Ovary (tissue), 10 donors: ENCODE measurements at regions of chr20 and their contacts with region 1.

Region 1: GRCh38 chr20:13105864-13106457 is 97.2 kb downstream of the SPTLC3 start:
- DNase-seq: no peak
- H3K4me3 ChIP-seq: no peak overlapping the region
- H3K27ac ChIP-seq: no peak overlapping the region
- H3K4me1 ChIP-seq: no peaks in the 10 kb centered on the region
- H3K27me3 ChIP-seq: no peaks in the 10 kb centered on the region
- CTCF ChIP-seq: peak; percentile 49 to 60 (median 55)
- EP300 ChIP-seq: no peak
- POLR2A ChIP-seq: no peak

Region 2: GRCh38 chr20:12925214-12925755 is 180.7 kb before region 1 on chr20:
- intact Hi-C with region 1: loop called in 2 of 4 experiments (anchors 5 to 10 kb)
- DNase-seq: peak; percentile 13 to 46 (median 40)
- H3K4me3 ChIP-seq: no peak overlapping the region
- H3K27ac ChIP-seq: no peak overlapping the region
- H3K4me1 ChIP-seq: no peaks in the 10 kb centered on the region
- H3K27me3 ChIP-seq: no peaks in the 10 kb centered on the region
- CTCF ChIP-seq: peak; percentile 59 to 84 (median 67)
- EP300 ChIP-seq: no peak
- POLR2A ChIP-seq: no peak

Region 3: GRCh38 chr20:12970372-12970821 is 135.6 kb before region 1 on chr20:
- intact Hi-C with region 1: loop called (anchors 5 to 10 kb)
- DNase-seq: peak in 1 of 5 donors; percentile 22
- H3K4me3 ChIP-seq: no peak overlapping the region
- H3K27ac ChIP-seq: no peak overlapping the region
- H3K4me1 ChIP-seq: no peaks in the 10 kb centered on the region
- H3K27me3 ChIP-seq: no peaks in the 10 kb centered on the region
- CTCF ChIP-seq: peak in 2 of 3 donors; percentile 31 to 40
- EP300 ChIP-seq: no peak
- POLR2A ChIP-seq: no peak

Region 4: DNA sequence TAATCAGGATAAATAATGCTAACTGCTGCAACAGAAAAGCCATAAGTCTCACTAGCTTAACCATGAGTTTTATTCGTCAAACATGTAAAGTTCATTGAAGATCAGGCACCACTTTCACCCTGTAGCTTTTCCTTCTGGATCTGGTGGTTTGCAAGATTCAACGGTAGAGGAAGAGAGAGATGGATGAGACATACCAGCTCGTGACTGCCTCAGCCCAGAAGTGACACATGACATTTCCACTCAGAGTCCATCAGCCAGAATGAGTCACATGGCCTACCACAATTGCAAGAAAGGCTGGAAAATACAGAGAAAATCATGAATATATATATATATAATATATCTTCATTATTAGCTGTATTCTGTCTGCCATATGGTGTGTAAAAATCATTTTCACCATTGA is 68.2 kb before region 1 on chr20:
- intact Hi-C with region 1: no loop called
- DNase-seq: no peak
- H3K4me3 ChIP-seq: no peak overlapping the region
- H3K27ac ChIP-seq: no peak overlapping the region
- H3K4me1 ChIP-seq: no peaks in the 10 kb centered on the region
- H3K27me3 ChIP-seq: no peaks in the 10 kb centered on the region
- CTCF ChIP-seq: no peak
- EP300 ChIP-seq: no peak
- POLR2A ChIP-seq: no peak

Region 5: DNA sequence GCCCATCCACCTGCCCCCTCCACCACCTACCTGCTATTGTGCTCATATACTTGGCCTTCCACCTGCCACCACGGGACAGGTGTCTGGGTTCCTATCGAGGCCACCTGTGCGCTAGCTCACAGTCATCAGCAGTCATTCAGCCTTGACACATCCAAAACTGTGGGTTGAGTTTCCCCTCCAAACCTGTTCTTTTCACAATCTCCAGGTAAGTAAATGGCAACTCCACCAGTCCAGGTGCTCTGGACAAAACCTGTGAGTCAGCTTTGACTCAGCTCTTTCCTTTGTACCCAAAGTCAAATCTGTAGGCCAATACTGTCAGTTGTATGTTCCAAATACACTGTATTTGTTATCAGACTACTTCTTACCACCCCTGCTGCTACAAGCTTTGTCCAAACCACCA is 44.6 kb before region 1 on chr20:
- intact Hi-C with region 1: no loop called
- DNase-seq: no peak
- H3K4me3 ChIP-seq: no peak overlapping the region
- H3K27ac ChIP-seq: no peak overlapping the region
- H3K4me1 ChIP-seq: no peaks in the 10 kb centered on the region
- H3K27me3 ChIP-seq: no peaks in the 10 kb centered on the region
- CTCF ChIP-seq: no peak
- EP300 ChIP-seq: no peak
- POLR2A ChIP-seq: no peak